Head of caudate nucleus (tissue), 42 donors: ENCODE measurements at regions of chr19 and their contacts with region 1.

Region 1: GRCh38 chr19:54325194-54325621 is 12.2 kb upstream of the LILRA5 start:
- DNase-seq: peak in 22 of 42 donors; percentile 13 to 79 (median 51)

Region 2: GRCh38 chr19:54390942-54391577 is 65.9 kb after region 1 on chr19:
- intact Hi-C with region 1: loop called (anchors 5 kb)
- DNase-seq: peak in 37 of 42 donors; percentile 26 to 87 (median 65)

Region 3: GRCh38 chr19:54451331-54451871 is 126.2 kb after region 1 on chr19:
- intact Hi-C with region 1: loop called (anchors 10 kb)
- DNase-seq: peak in 1 of 42 donors; percentile 2